ENCODE measurements at regions of chr1 and their contacts with region 1.

Region 1: GRCh38 chr1:192580351-192580962 is 4.9 kb downstream of the RGS1 start:
- DNase-seq: no peak
- ATAC-seq: no peak
- H3K4me3 Mint-ChIP-seq: peak overlapping the region; percentile 74
- H3K27ac Mint-ChIP-seq: no peak overlapping the region
- H3K4me1 Mint-ChIP-seq: peaks cover 45% of the 10 kb centered on the region
- H3K27me3 Mint-ChIP-seq: peaks cover 2% of the 10 kb centered on the region
- CTCF ChIP-seq: no peak

Region 2: DNA sequence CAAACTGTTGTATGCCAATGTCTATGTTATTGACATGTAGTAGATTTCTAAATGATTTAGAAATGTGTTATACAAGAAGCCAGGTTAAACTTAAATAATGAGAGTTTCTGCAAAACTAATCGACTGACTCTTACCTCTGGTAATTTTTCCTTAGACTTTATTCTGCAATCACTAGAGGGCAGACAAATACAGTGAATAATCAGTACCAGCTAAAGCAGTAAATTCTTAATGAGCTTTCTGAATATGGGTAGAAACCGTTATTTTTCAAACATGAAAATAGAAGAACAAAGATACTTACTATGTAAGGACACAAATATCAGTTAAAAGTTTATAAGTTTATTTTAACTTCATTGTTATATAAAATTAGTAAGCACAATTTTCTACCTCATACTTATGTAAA is 102.8 kb before region 1 on chr1:
- CTCF ChIA-PET with region 1: interaction called, 109 read pairs
- POLR2A ChIA-PET with region 1: interaction called, 6 read pairs
- intact Hi-C with region 1: loop called (anchors 1 kb)
- DNase-seq: no peak
- ATAC-seq: peak; percentile 75
- H3K4me3 Mint-ChIP-seq: no peak overlapping the region
- H3K27ac Mint-ChIP-seq: no peak overlapping the region
- H3K4me1 Mint-ChIP-seq: no peaks in the 10 kb centered on the region
- H3K27me3 Mint-ChIP-seq: peaks cover 7% of the 10 kb centered on the region
- CTCF ChIP-seq: peak; percentile 26

Region 3: DNA sequence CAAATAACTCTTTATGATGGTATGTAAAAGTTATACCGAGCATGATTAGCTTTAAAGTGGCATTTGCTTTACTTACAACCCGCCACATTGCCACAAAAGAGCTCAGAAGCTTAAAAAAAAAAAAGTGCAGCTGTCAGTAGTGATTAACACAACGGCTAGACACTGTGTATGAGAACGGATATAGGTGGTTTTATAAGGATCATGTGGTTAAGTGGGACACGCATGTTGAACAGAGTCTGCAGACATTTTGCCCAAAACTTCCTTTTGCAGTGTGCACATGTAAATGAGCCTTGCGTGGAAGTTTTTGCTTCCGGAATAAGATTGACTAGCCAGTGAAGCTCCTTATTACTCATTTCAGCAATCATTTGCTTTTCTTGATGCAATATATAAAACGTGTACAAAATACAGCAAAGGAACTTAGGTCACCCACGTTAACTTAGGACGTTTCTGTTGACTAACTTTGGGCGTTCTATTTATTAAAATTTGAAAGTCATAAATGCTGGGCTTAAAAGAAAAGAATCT is 63.6 kb before region 1 on chr1:
- CTCF ChIA-PET with region 1: interaction called, 5 read pairs
- POLR2A ChIA-PET with region 1: interaction called, 29 read pairs
- intact Hi-C with region 1: loop called (anchors 1 kb)
- DNase-seq: peak; percentile 23
- ATAC-seq: peak; percentile 96
- H3K4me3 Mint-ChIP-seq: peak overlapping the region; percentile 75
- H3K27ac Mint-ChIP-seq: peak overlapping the region; percentile 65
- H3K4me1 Mint-ChIP-seq: peaks cover 59% of the 10 kb centered on the region
- H3K27me3 Mint-ChIP-seq: no peaks in the 10 kb centered on the region
- CTCF ChIP-seq: no peak

Region 4: GRCh38 chr1:192539297-192540092 is 41.0 kb before region 1 on chr1:
- CTCF ChIA-PET with region 1: interaction called, 16 read pairs
- POLR2A ChIA-PET with region 1: interaction called, 38 read pairs
- intact Hi-C with region 1: loop called (anchors 1 kb)
- DNase-seq: no peak
- ATAC-seq: peak; percentile 25
- H3K4me3 Mint-ChIP-seq: peak overlapping the region; percentile 69
- H3K27ac Mint-ChIP-seq: peak overlapping the region; percentile 86
- H3K4me1 Mint-ChIP-seq: peaks cover 61% of the 10 kb centered on the region
- H3K27me3 Mint-ChIP-seq: no peaks in the 10 kb centered on the region
- CTCF ChIP-seq: no peak

Region 5: DNA sequence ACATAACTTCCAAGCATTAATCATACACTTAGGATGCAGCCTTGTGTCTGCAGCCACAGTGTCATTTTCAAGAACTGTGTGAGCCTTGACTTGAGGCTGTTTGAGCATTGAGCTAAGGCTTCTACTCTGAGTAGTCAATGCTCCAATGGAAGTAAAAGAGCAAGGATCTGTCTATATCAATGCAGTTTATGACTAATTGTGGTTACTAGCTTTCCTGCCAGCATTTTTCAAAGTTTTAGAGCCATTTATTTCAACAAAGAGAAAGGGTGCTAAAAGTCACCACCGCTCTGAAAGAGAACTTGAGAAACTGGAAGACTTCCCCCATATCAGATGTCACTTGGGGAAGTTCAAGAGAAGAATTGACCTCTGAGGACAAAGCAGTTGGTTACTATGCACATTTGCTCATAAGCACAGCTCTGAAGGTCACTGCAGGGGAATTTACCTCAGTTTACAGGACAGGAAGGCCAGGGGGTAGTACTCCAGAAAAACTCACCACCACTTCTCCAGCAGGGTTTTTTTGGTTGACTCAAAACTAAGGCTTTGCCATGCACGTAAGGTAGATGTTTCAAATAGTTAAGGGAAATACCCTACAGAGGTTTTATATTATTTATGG is 29.4 kb before region 1 on chr1:
- CTCF ChIA-PET with region 1: interaction called, 16 read pairs
- POLR2A ChIA-PET with region 1: interaction called, 38 read pairs
- intact Hi-C with region 1: loop called (anchors 1 kb)
- DNase-seq: no peak
- ATAC-seq: peak; percentile 38
- H3K4me3 Mint-ChIP-seq: peak overlapping the region; percentile 39
- H3K27ac Mint-ChIP-seq: peak overlapping the region; percentile 69
- H3K4me1 Mint-ChIP-seq: peaks cover 63% of the 10 kb centered on the region
- H3K27me3 Mint-ChIP-seq: no peaks in the 10 kb centered on the region
- CTCF ChIP-seq: no peak

Region 6: DNA sequence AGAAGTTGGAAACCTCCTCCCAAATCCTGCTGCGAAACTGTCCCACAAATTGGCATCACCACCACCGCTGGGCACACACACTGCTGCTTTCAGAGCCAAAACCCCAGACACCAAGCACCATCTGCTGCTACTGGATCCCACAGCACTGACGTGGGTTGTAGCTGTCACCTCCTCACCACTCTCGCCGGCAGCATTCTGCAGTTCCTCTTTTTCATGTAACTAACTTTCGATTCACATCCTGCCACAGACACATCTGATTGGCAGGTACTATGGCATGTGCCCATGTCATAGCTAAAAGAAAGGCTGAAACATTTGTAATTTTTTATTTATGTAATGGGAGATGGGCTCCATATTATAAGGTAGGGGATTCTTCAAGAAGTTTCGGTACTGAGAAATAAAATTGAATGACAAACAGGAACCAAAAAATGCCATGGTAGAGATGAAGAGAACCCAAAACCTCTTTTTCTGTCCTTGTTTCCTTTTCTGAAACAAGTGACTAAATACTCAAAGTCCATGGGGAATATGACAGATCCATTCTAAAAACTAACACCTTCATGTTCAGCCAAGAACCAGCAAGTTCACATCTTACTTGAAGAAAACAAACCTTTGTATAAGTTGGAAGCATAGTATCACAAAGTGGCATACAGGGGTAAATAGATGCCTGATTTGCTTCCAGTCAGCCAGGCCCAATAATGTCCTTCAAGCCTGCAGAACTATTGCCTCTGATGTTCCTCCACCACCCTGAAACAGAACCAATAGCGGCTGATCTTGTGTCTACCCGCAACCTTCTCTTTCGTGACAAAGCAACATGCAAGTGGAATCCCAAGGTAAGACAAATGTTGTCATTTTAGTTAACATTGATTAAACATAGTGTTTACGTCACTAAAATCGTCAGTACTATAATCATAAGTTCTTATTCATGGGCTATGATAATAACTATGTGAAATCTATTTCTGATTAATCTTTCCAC is 28.9 kb after region 1 on chr1:
- CTCF ChIA-PET with region 1: interaction called, 18 read pairs
- POLR2A ChIA-PET with region 1: interaction called, 22 read pairs
- intact Hi-C with region 1: loop called (anchors 1 kb)
- DNase-seq: peak; percentile 56
- ATAC-seq: peak; percentile 91
- H3K4me3 Mint-ChIP-seq: peak overlapping the region; percentile 57
- H3K27ac Mint-ChIP-seq: peak overlapping the region; percentile 86
- H3K4me1 Mint-ChIP-seq: peaks cover 32% of the 10 kb centered on the region
- H3K27me3 Mint-ChIP-seq: peaks cover 4% of the 10 kb centered on the region
- CTCF ChIP-seq: no peak

Region 7: DNA sequence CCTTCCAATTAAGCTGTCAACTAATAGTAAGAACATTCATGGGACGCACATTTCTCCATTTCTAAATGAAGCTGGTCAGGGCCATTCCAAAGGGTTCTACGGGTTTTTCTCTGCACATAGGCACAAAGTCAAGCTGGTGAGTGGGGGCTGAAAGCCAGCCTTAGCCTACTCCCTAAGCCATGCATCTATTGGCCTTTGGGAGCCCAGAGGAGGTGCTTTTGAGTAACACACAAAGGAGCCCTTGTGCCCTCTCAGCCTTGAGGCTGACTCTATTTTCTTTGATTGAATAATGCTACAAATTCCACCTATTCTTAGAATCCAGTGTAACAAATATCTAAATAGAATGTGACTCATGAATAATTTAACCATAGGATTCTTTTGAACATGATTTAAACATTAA is 129.1 kb after region 1 on chr1:
- CTCF ChIA-PET with region 1: no interaction called
- POLR2A ChIA-PET with region 1: no interaction called
- intact Hi-C with region 1: no loop called
- DNase-seq: no peak
- ATAC-seq: no peak
- H3K4me3 Mint-ChIP-seq: no peak overlapping the region
- H3K27ac Mint-ChIP-seq: no peak overlapping the region
- H3K4me1 Mint-ChIP-seq: no peaks in the 10 kb centered on the region
- H3K27me3 Mint-ChIP-seq: no peaks in the 10 kb centered on the region
- CTCF ChIP-seq: no peak

Region 8: GRCh38 chr1:193059268-193060225 is 479.1 kb after region 1 on chr1 and contains the starts of genes RO60 and UCHL5:
- CTCF ChIA-PET with region 1: no interaction called
- POLR2A ChIA-PET with region 1: no interaction called
- intact Hi-C with region 1: loop called (anchors 2 kb)
- DNase-seq: peak; percentile 85
- ATAC-seq: peak; percentile 94
- H3K4me3 Mint-ChIP-seq: peak within 1 kb of the TSS; percentile 100
- H3K27ac Mint-ChIP-seq: peak within 1 kb of the TSS; percentile 99
- H3K4me1 Mint-ChIP-seq: peaks cover 54% of the 10 kb centered on the region
- H3K27me3 Mint-ChIP-seq: no peaks in the 10 kb centered on the region
- CTCF ChIP-seq: no peak
- total RNA-seq, gene RO60: 55.9 and 61.1 TPM in 2 replicates
- total RNA-seq, gene UCHL5: 32.3 and 36.4 TPM in 2 replicates

Region 9: GRCh38 chr1:194495434-194495833 is 1915.0 kb after region 1 on chr1:
- CTCF ChIA-PET with region 1: no interaction called
- POLR2A ChIA-PET with region 1: no interaction called
- intact Hi-C with region 1: no loop called
- DNase-seq: no peak
- ATAC-seq: no peak
- H3K4me3 Mint-ChIP-seq: no peak overlapping the region
- H3K27ac Mint-ChIP-seq: no peak overlapping the region
- H3K4me1 Mint-ChIP-seq: no peaks in the 10 kb centered on the region
- H3K27me3 Mint-ChIP-seq: no peaks in the 10 kb centered on the region
- CTCF ChIP-seq: no peak